ENCODE measurements at regions of chr14 and their contacts with region 1.

Region 1: DNA sequence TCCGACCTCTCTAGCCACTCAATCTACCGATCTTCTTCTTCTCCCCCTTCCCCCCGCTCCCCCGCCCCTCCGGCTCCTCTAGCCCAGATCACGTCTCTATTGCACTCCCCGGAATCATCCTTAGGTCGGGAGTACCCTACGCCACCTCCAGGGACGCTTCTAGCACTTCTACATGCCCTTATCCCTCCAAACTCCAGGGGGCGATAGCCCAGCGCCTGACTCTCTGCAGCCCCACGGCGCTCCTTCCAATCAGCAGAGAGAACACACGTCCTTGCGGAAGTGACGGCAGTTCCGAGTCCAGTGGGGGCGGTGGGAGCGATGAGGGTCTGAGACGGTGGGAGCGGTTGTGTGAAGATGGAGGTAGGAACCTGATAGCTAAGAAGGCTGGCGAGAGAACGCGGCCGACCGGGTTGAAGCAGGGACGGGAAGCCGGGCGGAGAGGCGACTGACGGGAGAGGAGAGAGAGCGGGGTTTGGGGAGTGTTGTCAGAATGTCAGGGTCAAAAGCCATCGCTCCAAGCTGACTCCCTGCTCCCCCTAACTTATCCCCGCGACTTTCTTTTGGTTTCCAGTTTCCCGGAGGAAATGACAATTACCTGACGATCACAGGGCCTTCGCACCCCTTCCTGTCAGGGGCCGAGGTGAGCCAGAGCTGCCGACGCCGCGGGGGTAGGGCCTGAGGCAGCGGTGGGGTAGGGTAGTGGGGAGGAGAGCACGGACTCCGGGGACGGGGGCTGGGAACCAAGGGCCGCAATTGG is at the starts of genes RAB2B and TOX4:
- DNase-seq: peak; percentile 98
- ATAC-seq: peak; percentile 98
- H3K4me3 ChIP-seq: peak within 1 kb of the TSS; percentile 77 to 99 (median 83)
- H3K4me3 Mint-ChIP-seq: peak within 1 kb of the TSS; percentile 98
- H3K27ac ChIP-seq: peak within 1 kb of the TSS; percentile 70 to 94
- H3K27ac Mint-ChIP-seq: peak within 1 kb of the TSS; percentile 94
- H3K4me1 ChIP-seq: peaks cover 15 to 21% of the 10 kb centered on the region in 2 donors
- H3K4me1 Mint-ChIP-seq: peaks cover 33% of the 10 kb centered on the region
- H3K27me3 ChIP-seq: no peaks in the 10 kb centered on the region
- H3K27me3 Mint-ChIP-seq: no peaks in the 10 kb centered on the region
- CTCF ChIP-seq: peak; percentile 88
- total RNA-seq, gene RAB2B: 46.5 and 46.8 TPM in 2 replicates
- total RNA-seq, gene TOX4: 74.1 and 83.2 TPM in 2 replicates

Region 2: GRCh38 chr14:21149641-21150367 is 327.3 kb before region 1 on chr14:
- CTCF ChIA-PET with region 1: no interaction called
- POLR2A ChIA-PET with region 1: no interaction called
- intact Hi-C with region 1: no loop called
- DNase-seq: no peak
- ATAC-seq: no peak
- H3K4me3 ChIP-seq: no peak overlapping the region
- H3K4me3 Mint-ChIP-seq: no peak overlapping the region
- H3K27ac ChIP-seq: no peak overlapping the region
- H3K27ac Mint-ChIP-seq: no peak overlapping the region
- H3K4me1 ChIP-seq: no peaks in the 10 kb centered on the region
- H3K4me1 Mint-ChIP-seq: no peaks in the 10 kb centered on the region
- H3K27me3 ChIP-seq: no peaks in the 10 kb centered on the region
- H3K27me3 Mint-ChIP-seq: peaks cover 25% of the 10 kb centered on the region
- CTCF ChIP-seq: no peak

Region 3: DNA sequence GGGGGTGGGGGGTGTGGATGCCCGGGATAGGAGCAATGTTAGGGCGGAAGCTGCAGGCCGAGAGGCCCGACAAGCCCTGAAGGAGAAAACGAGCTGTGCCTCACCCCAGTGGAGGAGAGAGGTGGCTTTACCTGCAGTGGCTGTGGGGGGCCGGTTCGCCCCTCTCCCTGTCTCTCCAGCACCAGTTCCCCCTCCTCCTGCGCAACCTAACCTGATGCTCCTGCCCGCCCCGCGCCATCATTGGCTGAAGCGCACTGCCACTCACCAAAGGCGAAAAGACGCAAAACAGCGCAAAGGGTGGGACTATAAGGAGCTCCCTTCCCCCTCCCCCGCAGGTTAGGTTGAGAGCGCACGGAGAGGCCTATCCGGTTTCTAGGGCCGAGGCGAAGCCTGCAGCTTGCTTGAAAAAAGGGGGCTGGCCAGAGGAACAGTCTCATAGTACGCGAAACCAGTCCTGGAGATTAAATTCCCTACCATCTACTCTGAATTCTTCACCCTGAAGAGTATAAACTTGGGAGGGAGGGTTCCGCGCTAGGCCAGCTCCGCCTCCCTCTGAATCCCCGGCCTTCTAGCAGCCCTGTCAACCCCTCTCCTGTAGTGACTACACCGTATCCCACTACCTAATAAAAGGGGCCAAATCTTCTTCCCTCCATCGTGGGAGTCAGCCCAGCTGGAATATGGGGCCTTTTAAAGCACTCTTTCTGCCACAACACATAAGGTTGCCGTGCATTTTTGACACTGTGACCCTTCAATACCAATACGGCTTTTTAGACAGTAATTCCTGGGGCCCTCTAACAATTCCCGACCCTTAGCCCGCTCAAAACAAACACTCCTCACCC is 39.8 kb before region 1 on chr14:
- CTCF ChIA-PET with region 1: interaction called, 3 read pairs
- POLR2A ChIA-PET with region 1: interaction called, 8 read pairs
- intact Hi-C with region 1: loop called (anchors 1 kb)
- DNase-seq: peak; percentile 99
- ATAC-seq: peak; percentile 100
- H3K4me3 ChIP-seq: peak overlapping the region; percentile 79 to 96 (median 89)
- H3K4me3 Mint-ChIP-seq: peak overlapping the region; percentile 90
- H3K27ac ChIP-seq: peak overlapping the region; percentile 76 to 93
- H3K27ac Mint-ChIP-seq: peak overlapping the region; percentile 90
- H3K4me1 ChIP-seq: peaks cover 12 to 25% of the 10 kb centered on the region in 2 donors
- H3K4me1 Mint-ChIP-seq: peaks cover 53% of the 10 kb centered on the region
- H3K27me3 ChIP-seq: no peaks in the 10 kb centered on the region
- H3K27me3 Mint-ChIP-seq: no peaks in the 10 kb centered on the region
- CTCF ChIP-seq: no peak

Region 4: GRCh38 chr14:21498553-21499526 is 21.7 kb after region 1 on chr14:
- CTCF ChIA-PET with region 1: interaction called, 10 read pairs
- POLR2A ChIA-PET with region 1: no interaction called
- intact Hi-C with region 1: no loop called
- DNase-seq: peak; percentile 61
- ATAC-seq: peak; percentile 36
- H3K4me3 ChIP-seq: no peak overlapping the region
- H3K4me3 Mint-ChIP-seq: no peak overlapping the region
- H3K27ac ChIP-seq: no peak overlapping the region
- H3K27ac Mint-ChIP-seq: no peak overlapping the region
- H3K4me1 ChIP-seq: no peaks in the 10 kb centered on the region
- H3K4me1 Mint-ChIP-seq: no peaks in the 10 kb centered on the region
- H3K27me3 ChIP-seq: no peaks in the 10 kb centered on the region
- H3K27me3 Mint-ChIP-seq: no peaks in the 10 kb centered on the region
- CTCF ChIP-seq: peak; percentile 72

Region 5: GRCh38 chr14:21525962-21526671 is 49.0 kb after region 1 on chr14 and contains the start of gene SALL2:
- CTCF ChIA-PET with region 1: no interaction called
- POLR2A ChIA-PET with region 1: interaction called, 3 read pairs
- intact Hi-C with region 1: loop called (anchors 1 kb)
- DNase-seq: peak; percentile 43
- ATAC-seq: peak; percentile 69
- H3K4me3 ChIP-seq: peak within 1 kb of the TSS in 4 of 5 experiments; percentile 55 to 75 (median 67)
- H3K4me3 Mint-ChIP-seq: peak within 1 kb of the TSS; percentile 88
- H3K27ac ChIP-seq: peak within 1 kb of the TSS in 1 of 2 donors; percentile 58
- H3K27ac Mint-ChIP-seq: peak within 1 kb of the TSS; percentile 43
- H3K4me1 ChIP-seq: peaks cover 8 to 11% of the 10 kb centered on the region in 2 donors
- H3K4me1 Mint-ChIP-seq: peaks cover 12% of the 10 kb centered on the region
- H3K27me3 ChIP-seq: peaks cover 0 to 9% (median 2%) of the 10 kb centered on the region in 4 experiments
- H3K27me3 Mint-ChIP-seq: peaks cover 32% of the 10 kb centered on the region
- CTCF ChIP-seq: no peak
- total RNA-seq, gene SALL2: 1.3 and 2.5 TPM in 2 replicates